ENCODE measurements at regions of chr12 and their contacts with region 1.

Region 1: GRCh38 chr12:10454531-10454930 is 1.4 kb upstream of the KLRC1 start:
- DNase-seq: no peak
- ATAC-seq: no peak
- H3K4me3 ChIP-seq: no peak overlapping the region
- H3K27ac ChIP-seq: no peak overlapping the region
- H3K4me1 ChIP-seq: no peaks in the 10 kb centered on the region
- CTCF ChIP-seq: no peak
- EP300 ChIP-seq: no peak
- POLR2A ChIP-seq: no peak
- RAD21 ChIP-seq: no peak

Region 2: DNA sequence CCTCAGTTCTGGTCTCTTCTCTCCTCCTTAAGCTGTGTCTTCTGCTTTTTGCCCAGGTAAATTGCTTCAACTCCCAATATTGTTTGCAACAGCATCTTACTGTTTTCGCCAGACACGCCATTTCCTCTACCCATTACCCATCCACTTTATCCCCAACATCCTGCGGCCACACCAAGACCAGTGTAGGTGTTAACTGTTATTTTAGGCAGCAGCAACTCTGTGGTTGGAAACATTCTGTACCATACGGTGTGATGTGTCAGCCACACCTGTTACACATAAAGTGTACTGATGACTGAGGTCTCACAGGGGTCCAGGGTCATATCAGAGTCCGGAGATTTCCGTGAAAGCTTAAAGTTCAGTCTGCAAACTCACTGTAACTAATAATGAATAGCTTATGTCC is 168.6 kb before region 1 on chr12:
- CTCF ChIA-PET with region 1: no interaction called
- POLR2A ChIA-PET with region 1: interaction called, 12 read pairs
- DNase-seq: no peak
- ATAC-seq: no peak
- H3K4me3 ChIP-seq: no peak overlapping the region
- H3K27ac ChIP-seq: no peak overlapping the region
- H3K4me1 ChIP-seq: no peaks in the 10 kb centered on the region
- CTCF ChIP-seq: no peak
- EP300 ChIP-seq: no peak
- POLR2A ChIP-seq: no peak
- RAD21 ChIP-seq: no peak